Left ventricle myocardium inferior (tissue), 1 donor: ENCODE measurements at regions of chr15 and their contacts with region 1.

Region 1: GRCh38 chr15:39580117-39580484 is 778 bp upstream of the THBS1 start:
- DNase-seq: peak; percentile 93
- H3K4me3 ChIP-seq: peak overlapping the region; percentile 78
- H3K27ac ChIP-seq: peak overlapping the region; percentile 89
- H3K4me1 ChIP-seq: peaks cover 63% of the 10 kb centered on the region
- H3K27me3 ChIP-seq: peaks cover 7% of the 10 kb centered on the region
- CTCF ChIP-seq: peak; percentile 98

Region 2: DNA sequence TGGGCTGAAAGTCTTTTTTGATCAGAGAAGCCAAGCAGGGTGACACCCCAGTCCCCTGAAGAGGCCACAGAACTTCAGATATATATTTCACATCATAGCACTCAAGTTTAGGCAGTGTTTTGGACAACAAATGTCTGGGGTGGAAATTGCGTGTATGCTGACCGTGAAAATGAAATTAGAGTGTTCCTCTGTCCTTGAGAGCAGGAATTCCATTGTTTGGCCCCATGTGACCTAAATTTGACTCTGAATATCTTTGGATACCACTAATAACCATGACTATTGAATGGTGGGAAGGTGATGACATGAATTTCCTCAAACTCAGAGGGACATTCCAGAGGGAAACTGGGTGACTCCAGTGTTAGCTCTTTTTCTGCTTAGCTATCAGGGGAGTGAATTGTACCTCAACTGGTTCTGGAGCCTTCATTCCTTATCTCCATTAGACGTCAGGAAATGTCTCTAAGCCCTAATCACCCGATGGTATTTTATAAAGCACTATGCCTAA is 752.0 kb before region 1 on chr15:
- intact Hi-C with region 1: loop called (anchors 10 kb)
- DNase-seq: no peak
- H3K4me3 ChIP-seq: no peak overlapping the region
- H3K27ac ChIP-seq: no peak overlapping the region
- H3K4me1 ChIP-seq: peaks cover 3% of the 10 kb centered on the region
- H3K27me3 ChIP-seq: no peaks in the 10 kb centered on the region
- CTCF ChIP-seq: no peak

Region 3: DNA sequence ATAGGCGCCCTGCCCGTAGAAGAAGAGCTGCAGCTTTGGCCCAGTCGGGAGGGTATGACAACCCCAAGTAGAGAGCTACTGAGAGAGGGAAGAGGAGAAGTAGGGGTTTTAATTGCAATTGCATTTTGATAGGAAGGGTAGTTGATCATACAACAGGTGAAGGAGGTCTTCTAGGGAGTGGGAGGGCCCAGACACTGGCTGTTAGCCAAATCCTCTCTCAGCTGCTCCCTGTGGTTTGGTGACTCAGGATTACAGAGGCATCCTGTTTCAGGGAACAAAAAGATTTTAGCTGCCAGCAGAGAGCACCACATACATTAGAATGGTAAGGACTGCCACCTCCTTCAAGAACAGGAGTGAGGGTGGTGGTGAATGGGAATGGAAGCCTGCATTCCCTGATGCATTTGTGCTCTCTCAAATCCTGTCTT is 408.1 kb before region 1 on chr15:
- intact Hi-C with region 1: loop called (anchors 5 kb)
- DNase-seq: peak; percentile 23
- H3K4me3 ChIP-seq: no peak overlapping the region
- H3K27ac ChIP-seq: peak overlapping the region; percentile 51
- H3K4me1 ChIP-seq: peaks cover 11% of the 10 kb centered on the region
- H3K27me3 ChIP-seq: no peaks in the 10 kb centered on the region
- CTCF ChIP-seq: peak; percentile 57